Right ventricle myocardium inferior (tissue), 1 donor: ENCODE measurements at regions of chr22 and their contacts with region 1.

Region 1: GRCh38 chr22:37745548-37746365 is 48.9 kb downstream of the TRIOBP start:
- DNase-seq: peak; percentile 97
- ATAC-seq: peak; percentile 67

Region 2: GRCh38 chr22:37686002-37686982 is 59.5 kb before region 1 on chr22 and contains the start of gene NOL12:
- intact Hi-C with region 1: loop called (anchors 5 kb)
- DNase-seq: peak; percentile 88
- ATAC-seq: peak; percentile 91
- total RNA-seq, gene NOL12: 14.1 TPM

Region 3: DNA sequence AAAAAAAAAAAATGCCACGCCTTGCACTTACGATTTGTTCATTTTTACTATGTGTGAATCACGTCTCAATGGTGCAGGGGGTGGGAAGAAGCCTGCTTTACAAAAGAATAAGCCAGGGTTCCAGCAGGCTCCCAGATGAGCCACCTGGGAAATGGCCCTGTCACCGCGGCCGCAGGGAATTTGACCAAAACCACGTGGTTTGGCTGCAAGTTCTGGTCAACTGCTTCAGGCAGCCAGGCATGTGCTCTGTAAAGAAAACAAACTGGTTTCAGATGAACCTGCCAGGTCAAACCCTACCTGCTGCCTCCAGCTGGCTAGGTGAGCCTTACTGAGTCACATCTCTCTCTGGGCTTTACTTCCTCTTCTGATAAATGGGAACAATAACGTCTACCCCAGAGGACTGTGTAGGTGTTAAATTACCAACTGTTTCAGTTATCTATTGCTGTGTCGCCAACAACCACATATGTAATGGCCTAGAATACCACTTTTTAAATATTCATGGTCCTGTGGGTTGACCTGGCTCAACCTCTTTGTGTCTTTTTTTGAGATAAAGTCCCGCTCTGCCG is 31.4 kb after region 1 on chr22:
- intact Hi-C with region 1: no loop called
- DNase-seq: no peak
- ATAC-seq: peak; percentile 34

Region 4: GRCh38 chr22:37807410-37808293 is 61.9 kb after region 1 on chr22 and contains the start of gene GCAT:
- intact Hi-C with region 1: loop called (anchors 2 kb)
- DNase-seq: peak; percentile 98
- ATAC-seq: peak; percentile 92
- total RNA-seq, gene GCAT: 44.1 TPM